Heart left ventricle (tissue), 16 donors: ENCODE measurements at regions of chr1 and their contacts with region 1.

Region 1: GRCh38 chr1:25239681-25240541 is 7.3 kb downstream of the RSRP1 start:
- DNase-seq: peak; percentile 90 to 95 (median 93)
- ATAC-seq: peak; percentile 91 to 95 (median 94)
- H3K4me3 ChIP-seq: peak overlapping the region in 11 of 12 donors; percentile 24 to 64 (median 53)
- H3K27ac ChIP-seq: peak overlapping the region; percentile 75 to 97 (median 89)
- H3K4me1 ChIP-seq: peaks cover 5 to 79% (median 39%) of the 10 kb centered on the region in 12 donors
- H3K27me3 ChIP-seq: no peaks in the 10 kb centered on the region
- CTCF ChIP-seq: peak; percentile 46 to 80 (median 61)
- POLR2A ChIP-seq: peak in 1 of 2 donors; percentile 47

Region 2: DNA sequence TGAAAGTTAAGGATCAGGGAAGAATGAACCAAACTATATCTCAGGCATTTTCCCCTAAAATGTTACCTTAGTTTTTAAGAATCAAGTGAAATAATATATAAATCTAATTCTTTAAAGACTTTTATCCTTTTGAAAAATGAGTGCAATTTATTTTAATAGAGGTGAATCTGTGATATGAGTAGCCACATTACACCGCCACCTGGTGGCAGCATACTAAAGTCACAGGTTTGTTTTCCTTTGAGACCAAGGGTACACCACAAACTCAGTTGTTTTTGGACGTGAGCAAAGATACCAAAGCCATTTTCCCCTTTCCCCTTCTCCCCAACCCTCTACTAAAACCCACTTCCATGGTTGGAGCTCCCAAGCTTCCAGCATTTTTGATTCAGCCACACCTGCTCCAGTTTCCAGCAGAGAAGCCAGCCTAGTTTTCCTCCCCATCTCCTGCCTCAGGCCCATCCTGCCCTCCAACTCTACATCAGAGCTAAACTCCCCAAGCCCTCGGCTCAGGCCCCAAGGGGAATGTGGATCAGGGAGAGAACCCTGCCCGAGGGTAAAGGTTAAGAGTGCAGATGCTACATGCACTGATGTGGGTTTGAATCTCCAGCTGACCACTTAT is 280.6 kb after region 1 on chr1:
- intact Hi-C with region 1: loop called in 1 of 10 experiments (anchors 10 kb)
- DNase-seq: peak in 3 of 5 donors; percentile 51 to 68 (median 56)
- ATAC-seq: peak in 2 of 4 donors; percentile 36 to 55
- H3K4me3 ChIP-seq: no peak overlapping the region
- H3K27ac ChIP-seq: no peak overlapping the region
- H3K4me1 ChIP-seq: peaks cover 0 to 6% (median 0%) of the 10 kb centered on the region in 12 donors
- H3K27me3 ChIP-seq: no peaks in the 10 kb centered on the region
- CTCF ChIP-seq: peak; percentile 73 to 88 (median 84)
- POLR2A ChIP-seq: no peak

Region 3: DNA sequence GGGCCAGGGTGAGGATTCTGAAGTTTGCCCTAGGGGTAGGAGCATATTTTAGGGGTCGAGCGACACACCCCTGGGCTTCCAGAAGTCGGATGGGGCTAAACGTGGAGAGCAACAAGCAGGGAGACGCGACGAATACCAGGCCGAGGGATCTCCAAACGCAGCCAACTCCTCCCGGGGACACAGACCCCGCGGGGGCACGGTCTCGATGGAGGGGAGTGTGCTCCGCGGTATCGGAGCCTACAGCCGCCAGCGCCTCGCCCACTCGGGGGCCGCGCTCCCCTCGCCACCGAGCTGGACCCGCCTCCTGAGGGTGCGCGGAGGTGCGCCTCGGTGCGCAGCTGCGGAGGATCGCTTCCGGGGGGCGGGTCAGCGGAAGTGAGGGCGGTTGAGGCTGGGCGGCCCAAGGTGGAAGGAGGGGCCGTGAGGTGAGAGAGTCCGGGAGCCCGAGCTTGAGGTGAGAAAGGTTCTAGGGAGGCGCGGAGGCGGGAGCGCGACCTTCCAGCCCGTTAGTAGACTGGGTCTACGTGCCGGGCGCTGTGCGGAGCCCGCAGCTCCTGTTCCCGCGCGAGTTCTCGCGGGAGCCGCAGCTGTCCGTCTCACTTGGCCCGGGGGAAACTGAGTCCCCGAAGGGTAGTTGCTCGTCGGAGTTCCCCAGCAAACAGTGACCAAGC is 579.8 kb after region 1 on chr1 and contains the start of gene MTFR1L:
- intact Hi-C with region 1: loop called in 2 of 10 experiments (anchors 5 to 10 kb)
- DNase-seq: peak; percentile 90 to 93 (median 92)
- ATAC-seq: peak; percentile 89 to 91 (median 90)
- H3K4me3 ChIP-seq: peak within 1 kb of the TSS; percentile 74 to 98 (median 89)
- H3K27ac ChIP-seq: peak within 1 kb of the TSS; percentile 81 to 98 (median 92)
- H3K4me1 ChIP-seq: peaks cover 0 to 59% (median 34%) of the 10 kb centered on the region in 12 donors
- H3K27me3 ChIP-seq: no peaks in the 10 kb centered on the region
- CTCF ChIP-seq: no peak
- POLR2A ChIP-seq: peak in 1 of 2 donors; percentile 89
- total RNA-seq, gene MTFR1L: 123 to 319 (median 214) TPM